Panc1 (cell line): ENCODE measurements at regions of chr5 and their contacts with region 1.

Region 1: GRCh38 chr5:148120317-148120716 is 48.0 kb upstream of the SPINK14 start:
- DNase-seq: no peak
- ATAC-seq: no peak
- H3K4me3 ChIP-seq: no peak overlapping the region
- H3K27ac ChIP-seq: no peak overlapping the region
- H3K4me1 ChIP-seq: no peaks in the 10 kb centered on the region
- H3K27me3 ChIP-seq: no peaks in the 10 kb centered on the region
- CTCF ChIP-seq: no peak

Region 2: GRCh38 chr5:147949711-147950573 is 170.4 kb before region 1 on chr5:
- CTCF ChIA-PET with region 1: no interaction called
- POLR2A ChIA-PET with region 1: no interaction called
- in situ Hi-C with region 1: no loop called
- intact Hi-C with region 1: loop called (anchors 2 kb)
- DNase-seq: peak; percentile 25
- ATAC-seq: peak; percentile 84
- H3K4me3 ChIP-seq: no peak overlapping the region
- H3K27ac ChIP-seq: no peak overlapping the region
- H3K4me1 ChIP-seq: no peaks in the 10 kb centered on the region
- H3K27me3 ChIP-seq: no peaks in the 10 kb centered on the region
- CTCF ChIP-seq: peak; percentile 65; the same call in 1 of the 2 replicates

Region 3: DNA sequence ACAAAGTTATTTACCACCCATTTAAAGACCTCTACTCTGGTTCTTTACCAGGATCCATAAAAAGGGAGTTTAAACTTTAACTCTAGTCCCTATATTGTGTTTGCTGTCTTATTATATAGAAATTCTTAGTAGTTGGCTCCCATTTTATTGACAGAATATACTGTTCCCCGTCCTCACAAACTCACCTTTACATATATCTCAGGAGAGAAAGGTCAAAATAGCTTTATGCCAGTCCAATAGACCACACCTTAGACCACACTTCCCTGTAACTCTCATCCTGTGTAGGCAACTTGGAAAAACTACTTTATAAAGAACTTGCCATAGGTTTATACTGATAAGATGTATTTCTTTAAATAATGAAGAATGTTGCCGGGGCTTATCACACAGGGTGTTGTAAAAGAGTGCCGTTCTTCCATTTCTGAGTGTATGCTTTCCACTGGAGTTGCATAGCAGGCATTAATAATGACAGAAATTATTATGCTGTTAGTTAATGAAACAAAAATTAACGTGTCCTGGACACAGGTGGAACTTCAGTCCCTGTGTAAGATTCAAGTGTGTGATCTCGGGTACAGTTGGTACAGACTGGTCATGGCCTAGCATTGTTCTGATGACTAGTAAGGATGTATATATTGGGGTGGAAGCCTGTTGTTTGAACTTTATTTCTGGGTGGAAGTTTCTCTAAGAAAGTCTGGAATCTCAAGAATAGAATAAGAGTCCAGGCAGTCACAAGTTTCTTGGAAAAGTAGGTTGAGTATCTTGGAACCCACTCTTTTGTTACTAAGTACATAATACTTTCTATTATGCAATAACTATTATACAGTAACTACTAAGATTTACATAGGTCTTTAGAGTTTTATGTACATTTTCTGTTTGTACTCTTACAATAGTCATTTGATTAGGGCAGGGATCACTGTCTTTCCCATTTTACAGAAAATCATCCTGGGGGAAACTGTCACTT is 15.1 kb after region 1 on chr5:
- CTCF ChIA-PET with region 1: no interaction called
- POLR2A ChIA-PET with region 1: no interaction called
- in situ Hi-C with region 1: no loop called
- intact Hi-C with region 1: no loop called
- DNase-seq: no peak
- ATAC-seq: no peak
- H3K4me3 ChIP-seq: no peak overlapping the region
- H3K27ac ChIP-seq: no peak overlapping the region
- H3K4me1 ChIP-seq: no peaks in the 10 kb centered on the region
- H3K27me3 ChIP-seq: peaks cover 3% of the 10 kb centered on the region; the same call in 1 of the 2 replicates
- CTCF ChIP-seq: no peak